RWPE1 (cell line): ENCODE measurements at regions of chr2 and their contacts with region 1.

Region 1: DNA sequence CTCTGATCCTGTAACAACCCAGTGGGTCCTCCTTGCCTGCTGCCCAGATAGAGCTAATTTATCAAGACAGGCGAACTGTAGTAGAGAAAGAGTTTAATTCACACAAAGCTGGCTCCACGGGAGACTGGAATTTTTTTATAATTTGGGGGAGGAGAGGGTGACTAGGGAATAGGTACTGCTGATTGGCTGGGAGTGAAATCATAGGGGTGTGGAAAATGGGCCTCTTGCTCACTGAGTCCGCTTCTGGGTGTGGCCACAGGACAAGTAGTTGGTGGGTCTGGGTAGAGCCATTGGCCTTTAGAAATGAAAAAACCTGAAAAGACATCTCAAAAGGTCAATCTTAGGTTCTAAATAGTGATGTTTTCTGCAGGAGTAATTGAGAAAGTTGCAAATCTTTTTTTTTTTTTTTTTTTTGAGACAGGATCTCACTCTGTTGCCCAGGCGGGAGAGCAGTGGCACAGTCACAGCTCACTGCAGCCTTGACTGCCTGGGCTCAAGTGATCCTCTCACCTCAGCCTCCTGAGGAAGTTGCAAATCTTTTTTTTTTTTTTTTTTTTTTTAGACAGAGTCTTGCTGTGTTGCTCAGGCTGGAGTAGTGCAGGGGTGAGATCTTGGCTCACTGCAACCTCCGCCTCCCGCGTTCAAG is 14.4 kb upstream of the UGGT1 start:
- DNase-seq: no peak
- H3K27ac ChIP-seq: no peak overlapping the region
- CTCF ChIP-seq: no peak

Region 2: DNA sequence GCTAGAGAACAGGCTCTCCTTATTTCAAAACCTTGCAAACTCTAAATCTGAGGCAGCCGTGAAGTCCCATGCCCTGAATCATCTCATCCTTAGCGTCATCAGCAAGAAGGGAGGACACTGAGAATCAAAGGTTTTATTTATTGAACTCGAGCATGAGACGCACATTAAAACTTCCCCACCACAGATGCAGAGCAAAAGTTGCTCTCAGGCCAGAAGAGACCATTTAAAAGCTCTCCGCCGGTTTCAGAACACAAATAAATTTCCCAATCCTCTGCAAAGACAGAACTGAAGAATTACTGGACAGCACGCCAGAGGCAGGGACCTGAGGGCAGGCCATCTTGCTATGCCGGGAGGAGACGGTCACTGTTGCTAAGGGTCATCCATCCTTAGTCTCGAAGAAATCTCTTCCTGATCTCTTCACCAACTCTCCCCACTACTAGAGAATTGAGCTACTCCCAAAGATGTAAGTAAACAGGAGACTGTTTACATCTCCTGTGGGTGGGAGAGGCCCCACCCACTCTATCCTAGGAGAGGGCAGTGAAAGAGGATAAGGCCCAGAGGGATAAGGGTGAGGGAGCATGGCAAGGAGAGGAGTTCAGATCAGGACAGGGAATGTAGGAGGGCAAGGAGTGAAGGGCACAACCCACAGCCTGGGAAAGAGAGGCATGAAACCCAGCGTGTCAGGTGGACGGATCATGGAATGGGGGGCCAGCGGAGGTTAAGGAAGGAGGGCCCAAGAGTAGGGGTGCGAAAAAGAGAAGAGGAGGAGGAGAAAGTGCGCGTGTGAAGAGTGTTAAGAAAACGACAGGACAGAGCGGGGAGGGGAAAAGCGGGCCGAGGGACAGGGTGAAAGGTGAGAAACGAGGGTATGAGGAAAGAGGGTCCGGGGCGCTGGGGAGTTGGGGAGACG is 191.9 kb before region 1 on chr2:
- CTCF ChIA-PET with region 1: no interaction called
- POLR2A ChIA-PET with region 1: no interaction called
- DNase-seq: no peak
- H3K27ac ChIP-seq: peak overlapping the region; percentile 95
- CTCF ChIP-seq: no peak

Region 3: GRCh38 chr2:128062571-128062970 is 14.0 kb before region 1 on chr2:
- CTCF ChIA-PET with region 1: interaction called, 11 read pairs
- POLR2A ChIA-PET with region 1: interaction called, 3 read pairs
- DNase-seq: no peak
- H3K27ac ChIP-seq: no peak overlapping the region
- CTCF ChIP-seq: no peak